Thyroid gland (tissue), 4 donors: ENCODE measurements at regions of chr2 and their contacts with region 1.

Region 1: DNA sequence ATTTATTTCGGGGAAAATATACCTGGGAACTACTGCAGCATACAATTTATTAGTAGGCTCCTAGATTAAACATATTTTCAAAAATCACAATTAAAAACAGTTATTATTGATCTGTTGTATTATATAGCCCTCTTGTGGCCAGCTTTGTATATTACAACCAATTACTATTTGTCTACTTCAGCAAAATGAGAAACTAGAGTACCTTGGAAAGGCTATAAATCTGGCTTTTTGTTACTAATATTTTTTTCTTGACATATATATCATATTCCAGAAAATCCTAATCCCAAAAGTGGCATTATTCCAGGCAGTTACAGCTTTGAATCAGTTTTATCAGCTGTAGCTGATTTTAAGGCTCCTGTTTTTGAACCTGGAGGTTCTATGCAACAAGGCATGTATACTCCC is 101.2 kb downstream of the UBR3 start:
- DNase-seq: no peak
- H3K4me3 ChIP-seq: no peak overlapping the region
- H3K27ac ChIP-seq: no peak overlapping the region
- H3K4me1 ChIP-seq: peaks cover 4 to 8% of the 10 kb centered on the region in 2 donors
- H3K27me3 ChIP-seq: no peaks in the 10 kb centered on the region
- CTCF ChIP-seq: peak; percentile 39 to 86 (median 66)
- POLR2A ChIP-seq: no peak

Region 2: GRCh38 chr2:169824373-169825333 is 103.8 kb before region 1 on chr2 and contains the start of gene METTL5:
- intact Hi-C with region 1: loop called (anchors 5 kb)
- DNase-seq: peak; percentile 83 to 87
- H3K4me3 ChIP-seq: peak within 1 kb of the TSS; percentile 25 to 55 (median 53)
- H3K27ac ChIP-seq: peak within 1 kb of the TSS; percentile 59 to 89 (median 67)
- H3K4me1 ChIP-seq: peaks cover 27 to 32% of the 10 kb centered on the region in 2 donors
- H3K27me3 ChIP-seq: no peaks in the 10 kb centered on the region
- CTCF ChIP-seq: peak; percentile 68 to 100 (median 99)
- POLR2A ChIP-seq: peak; percentile 21 to 74
- total RNA-seq, gene METTL5: 49.8 to 77.3 (median 57.4) TPM

Region 3: DNA sequence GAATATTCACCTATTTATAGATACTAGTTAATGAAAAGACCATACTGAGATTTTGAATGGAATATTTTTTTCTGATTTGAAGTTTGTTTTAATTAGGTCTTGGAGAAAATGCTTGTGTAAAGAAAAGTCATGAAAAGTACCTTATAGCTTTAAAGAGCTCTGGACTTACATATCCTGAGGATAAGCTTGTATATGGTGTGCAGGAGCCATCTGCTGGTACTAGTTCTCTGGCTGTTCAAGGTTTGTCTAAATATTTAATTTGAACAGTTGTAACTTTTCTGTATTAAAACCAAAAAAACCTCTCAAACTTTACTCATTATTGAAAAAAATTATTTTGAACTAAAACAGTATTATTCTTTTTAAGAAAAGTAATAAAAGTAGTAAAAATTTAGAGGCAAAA is 51.1 kb before region 1 on chr2:
- intact Hi-C with region 1: no loop called
- DNase-seq: no peak
- H3K4me3 ChIP-seq: no peak overlapping the region
- H3K27ac ChIP-seq: no peak overlapping the region
- H3K4me1 ChIP-seq: peaks cover 0 to 3% of the 10 kb centered on the region in 2 donors
- H3K27me3 ChIP-seq: no peaks in the 10 kb centered on the region
- CTCF ChIP-seq: peak in 4 of 6 experiments; percentile 31 to 37 (median 34)
- POLR2A ChIP-seq: no peak